Endothelial cell of umbilical vein (primary cell): ENCODE measurements at regions of chr3 and their contacts with region 1.

Region 1: DNA sequence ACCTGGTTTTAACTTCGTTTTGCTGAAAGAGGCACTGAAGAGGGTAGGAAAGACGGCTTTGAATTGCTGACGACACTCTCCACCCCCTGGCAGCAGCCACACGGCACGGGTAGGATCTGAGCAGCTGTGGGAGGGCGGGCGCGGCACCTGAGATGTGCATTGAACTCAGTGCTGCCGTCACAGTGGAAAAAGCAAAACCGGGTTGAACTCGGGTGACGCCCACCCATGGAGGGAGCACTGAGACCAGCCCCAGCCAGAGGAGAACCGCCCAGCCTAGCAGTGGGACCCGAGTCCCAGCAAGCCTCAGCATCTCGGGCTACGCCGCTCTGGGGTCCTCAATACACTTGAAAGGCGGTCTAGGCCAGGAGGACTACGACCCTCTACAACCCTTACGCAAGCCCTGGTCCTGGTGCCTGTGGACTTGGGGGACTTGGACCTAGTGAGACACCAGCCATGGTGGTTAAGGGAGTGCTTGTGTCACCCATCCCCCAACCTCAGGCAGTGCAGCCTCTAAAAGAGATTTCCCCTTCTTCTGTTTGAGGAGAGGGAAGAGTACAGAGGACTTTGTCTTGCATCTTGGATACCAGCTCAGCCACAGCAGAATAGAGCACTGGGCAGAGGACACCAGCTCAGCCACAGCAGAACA is 50.0 kb upstream of the RPL35A start:
- DNase-seq: no peak
- H3K4me3 ChIP-seq: no peak overlapping the region
- H3K27ac ChIP-seq: no peak overlapping the region
- H3K4me1 ChIP-seq: no peaks in the 10 kb centered on the region
- H3K27me3 ChIP-seq: no peaks in the 10 kb centered on the region
- CTCF ChIP-seq: no peak
- POLR2A ChIP-seq: no peak

Region 2: DNA sequence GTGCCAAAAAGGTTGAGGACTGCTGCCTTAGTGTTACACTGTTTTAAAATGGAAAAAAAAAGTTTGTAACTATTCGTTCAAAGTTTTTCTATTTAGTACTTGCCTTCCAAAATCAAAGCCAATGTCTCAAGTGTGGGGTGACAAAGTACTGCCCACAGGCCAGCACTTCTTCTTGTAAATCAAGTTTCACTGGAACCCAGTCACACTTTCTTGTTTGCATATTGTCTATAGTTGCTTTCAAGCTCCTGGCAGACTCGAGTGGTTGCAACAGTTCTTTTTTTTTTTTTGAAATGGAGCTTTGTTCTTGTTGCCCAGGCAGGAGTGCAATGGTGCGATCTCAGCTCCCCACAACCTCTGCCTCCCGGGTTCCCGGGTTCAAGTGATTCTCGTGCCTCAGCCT is 25.3 kb before region 1 on chr3:
- CTCF ChIA-PET with region 1: no interaction called
- POLR2A ChIA-PET with region 1: interaction called, 11 read pairs
- dilution Hi-C with region 1: no loop called
- intact Hi-C with region 1: no loop called
- DNase-seq: no peak
- H3K4me3 ChIP-seq: no peak overlapping the region
- H3K27ac ChIP-seq: no peak overlapping the region
- H3K4me1 ChIP-seq: no peaks in the 10 kb centered on the region
- H3K27me3 ChIP-seq: no peaks in the 10 kb centered on the region
- CTCF ChIP-seq: no peak
- POLR2A ChIP-seq: no peak